H1 (cell line): ENCODE measurements at regions of chr7 and their contacts with region 1.

Region 1: DNA sequence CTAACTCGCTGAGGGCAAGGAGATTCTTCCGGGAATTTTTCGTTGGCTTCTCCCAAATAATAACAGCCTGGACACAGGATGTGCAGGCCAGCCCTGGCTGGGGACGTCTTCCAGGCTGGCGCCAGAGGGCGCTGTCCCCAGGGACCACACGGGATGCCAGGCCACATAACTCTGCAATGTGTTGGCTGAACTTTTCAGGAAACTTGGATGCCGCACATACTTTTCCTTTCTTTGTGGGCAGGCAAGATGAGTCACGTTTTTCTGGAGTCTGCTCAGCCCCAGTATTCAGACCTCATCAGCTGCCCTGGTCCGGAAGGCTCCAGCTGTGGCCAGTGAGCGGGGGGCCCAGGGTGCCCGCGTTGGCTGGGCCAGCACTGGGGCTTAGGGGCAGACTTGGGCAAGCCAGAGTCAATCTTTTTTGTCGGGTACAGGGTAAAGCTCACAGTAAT is 122.7 kb downstream of the PRKAG2 start:
- DNase-seq: peak; percentile 86 to 91
- H3K4me3 ChIP-seq: no peak overlapping the region
- H3K27ac ChIP-seq: no peak overlapping the region
- H3K4me1 ChIP-seq: peaks cover 2 to 10% (median 5%) of the 10 kb centered on the region in 4 experiments; a peak in 6 of 7 replicates
- H3K27me3 ChIP-seq: no peaks in the 10 kb centered on the region; a peak in 2 of 7 replicates
- CTCF ChIP-seq: peak; percentile 91 to 98 (median 96)
- EP300 ChIP-seq: peak in 1 of 2 experiments; percentile 79; a peak in 1 of 3 replicates
- POLR2A ChIP-seq: no peak
- RAD21 ChIP-seq: peak; percentile 62 to 73

Region 2: DNA sequence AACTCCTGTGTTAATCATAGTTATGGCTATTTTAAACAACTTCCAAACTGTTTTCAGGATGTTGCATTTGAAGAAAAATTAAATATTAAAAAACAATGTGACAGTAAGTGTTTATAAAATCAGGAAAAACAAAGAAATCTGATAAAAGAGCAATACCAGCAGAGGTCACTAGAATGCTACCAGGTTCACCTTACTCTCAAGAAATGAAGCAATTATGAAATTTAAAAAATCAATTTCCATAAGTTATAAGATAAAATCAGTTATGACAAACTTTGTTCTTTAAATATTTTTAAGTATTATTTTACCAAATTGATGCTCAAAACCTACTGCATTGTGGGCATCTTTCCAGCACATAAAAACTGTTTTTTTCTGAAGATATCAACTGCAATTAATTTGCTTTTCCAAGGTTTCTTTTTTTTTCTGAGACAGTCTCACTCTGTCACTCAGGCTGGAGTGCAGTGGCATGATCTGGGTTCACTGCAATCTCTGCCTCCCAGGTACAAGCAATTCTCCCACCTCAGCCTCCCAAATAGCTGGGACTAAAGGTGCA is 183.7 kb before region 1 on chr7:
- CTCF ChIA-PET with region 1: interaction called, 20 read pairs
- POLR2A ChIA-PET with region 1: no interaction called
- DNase-seq: no peak
- H3K4me3 ChIP-seq: no peak overlapping the region
- H3K27ac ChIP-seq: no peak overlapping the region
- H3K4me1 ChIP-seq: peaks cover 0 to 5% (median 2%) of the 10 kb centered on the region in 4 experiments; a peak in 3 of 7 replicates
- H3K27me3 ChIP-seq: no peaks in the 10 kb centered on the region
- CTCF ChIP-seq: peak in 1 of 3 experiments; percentile 26; a peak in 1 of 4 replicates
- EP300 ChIP-seq: no peak
- POLR2A ChIP-seq: no peak
- RAD21 ChIP-seq: peak in 1 of 2 experiments; percentile 54; a peak in 3 of 4 replicates

Region 3: DNA sequence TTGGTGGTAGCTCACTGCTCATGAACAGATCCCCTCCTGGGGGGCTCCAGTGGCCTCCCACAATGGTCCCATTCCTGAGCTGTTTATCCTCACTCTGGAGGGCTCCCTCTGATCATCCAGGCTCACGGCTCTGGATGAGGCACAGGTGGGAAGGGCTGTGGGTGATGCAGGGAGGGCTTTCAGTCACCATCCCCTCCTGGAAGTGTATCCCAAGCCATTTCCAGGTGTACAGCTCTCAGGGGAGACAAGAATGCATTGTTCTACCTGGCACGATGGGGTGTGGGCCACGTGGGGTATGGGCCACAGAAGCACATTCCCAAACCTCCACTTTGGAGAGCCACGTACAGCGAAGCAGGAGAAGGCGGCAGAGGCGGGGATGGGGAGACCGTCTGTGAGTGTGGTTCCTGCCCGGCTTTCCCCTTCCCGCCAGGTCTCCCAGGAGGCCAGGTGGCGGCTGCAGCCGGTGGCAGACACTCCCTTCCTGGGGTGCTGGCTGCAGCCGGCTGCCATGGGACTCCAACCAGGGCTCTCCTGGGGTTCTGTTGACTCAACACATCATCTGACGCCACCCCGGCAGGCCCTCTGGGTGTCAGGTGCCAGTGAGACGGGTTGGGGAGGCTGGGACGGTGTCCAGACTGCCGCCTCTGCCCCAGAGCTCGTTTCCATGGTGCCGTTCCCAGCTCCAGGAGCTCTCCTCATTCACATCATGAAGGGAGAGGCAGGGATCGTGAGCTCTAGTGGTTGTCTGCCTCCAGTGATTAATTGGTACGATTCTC is 64.8 kb before region 1 on chr7:
- CTCF ChIA-PET with region 1: interaction called, 10 read pairs
- POLR2A ChIA-PET with region 1: no interaction called
- DNase-seq: no peak
- H3K4me3 ChIP-seq: no peak overlapping the region
- H3K27ac ChIP-seq: no peak overlapping the region; the same call in 1 of the 2 replicates
- H3K4me1 ChIP-seq: peaks cover 0 to 16% (median 4%) of the 10 kb centered on the region in 4 experiments; a peak in 2 of 7 replicates
- H3K27me3 ChIP-seq: peaks cover 0 to 3% (median 0%) of the 10 kb centered on the region in 4 experiments; a peak in 1 of 7 replicates
- CTCF ChIP-seq: no peak
- EP300 ChIP-seq: no peak
- POLR2A ChIP-seq: no peak
- RAD21 ChIP-seq: no peak